HCT116 (cell line): ENCODE measurements at regions of chr17 and their contacts with region 1.

Region 1: GRCh38 chr17:39547713-39548478 is 59.8 kb downstream of the NEUROD2 start:
- DNase-seq: peak; percentile 13
- ATAC-seq: peak; percentile 92
- H3K4me3 ChIP-seq: no peak overlapping the region
- H3K27ac ChIP-seq: no peak overlapping the region
- H3K4me1 ChIP-seq: no peaks in the 10 kb centered on the region
- H3K27me3 ChIP-seq: no peaks in the 10 kb centered on the region
- CTCF ChIP-seq: peak; percentile 92 to 99 (median 98)
- POLR2A ChIP-seq: no peak
- RAD21 ChIP-seq: peak; percentile 83

Region 2: DNA sequence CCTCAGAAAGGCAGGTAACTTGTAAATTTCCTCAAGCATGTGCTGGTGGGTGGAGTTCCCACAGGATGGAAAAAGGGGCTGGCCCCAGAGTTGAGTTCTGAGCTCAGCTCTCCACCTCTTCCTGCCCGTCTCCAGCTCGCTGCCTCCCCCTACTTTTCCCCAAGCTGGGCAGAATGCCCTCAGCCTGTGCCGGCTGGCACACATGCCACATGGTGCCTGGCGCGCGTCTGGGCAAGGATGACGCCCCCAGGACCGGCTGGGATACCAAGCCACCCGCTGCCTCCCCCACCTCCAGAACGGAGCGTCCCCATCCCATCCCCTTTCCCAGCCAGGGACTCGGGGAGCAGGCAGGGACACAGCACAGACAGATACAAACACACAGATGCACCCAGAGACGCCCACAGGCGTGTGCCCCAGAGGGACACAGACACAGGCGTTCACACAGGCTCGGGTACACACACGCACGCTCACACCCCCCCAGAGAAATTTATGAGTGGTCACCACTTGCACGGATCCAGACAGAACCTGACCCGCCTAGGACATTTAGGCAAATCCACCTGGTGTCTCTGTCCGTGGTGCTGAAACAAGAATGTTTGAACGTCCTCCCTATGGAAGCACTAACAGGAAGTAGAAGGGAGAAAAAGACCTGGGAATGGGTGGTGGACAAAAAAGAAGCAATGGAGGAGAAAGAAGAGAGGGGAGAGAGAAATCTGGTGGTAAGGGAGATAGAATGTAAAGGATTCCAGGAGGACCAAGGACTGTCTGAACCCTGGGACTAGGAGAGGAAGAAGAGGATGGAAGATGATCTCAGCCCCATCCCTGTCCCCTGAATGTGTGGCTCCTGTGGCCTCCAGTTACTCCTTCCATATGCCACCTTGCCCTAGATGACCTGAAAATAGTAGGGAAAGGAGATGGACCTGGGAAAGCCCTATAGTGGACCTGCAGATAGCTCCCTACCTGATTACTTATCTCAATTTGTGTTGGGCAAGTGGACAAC is 44.4 kb after region 1 on chr17:
- CTCF ChIA-PET with region 1: no interaction called
- POLR2A ChIA-PET with region 1: no interaction called
- RAD21 ChIA-PET with region 1: no interaction called
- intact Hi-C with region 1: no loop called
- DNase-seq: peak; percentile 13
- ATAC-seq: 0 out of 2 replicates have a peak, but pooled peaks have one; percentile 22
- H3K4me3 ChIP-seq: no peak overlapping the region
- H3K27ac ChIP-seq: no peak overlapping the region
- H3K4me1 ChIP-seq: no peaks in the 10 kb centered on the region
- H3K27me3 ChIP-seq: peaks cover 14% of the 10 kb centered on the region
- CTCF ChIP-seq: no peak
- POLR2A ChIP-seq: no peak
- RAD21 ChIP-seq: no peak

Region 3: DNA sequence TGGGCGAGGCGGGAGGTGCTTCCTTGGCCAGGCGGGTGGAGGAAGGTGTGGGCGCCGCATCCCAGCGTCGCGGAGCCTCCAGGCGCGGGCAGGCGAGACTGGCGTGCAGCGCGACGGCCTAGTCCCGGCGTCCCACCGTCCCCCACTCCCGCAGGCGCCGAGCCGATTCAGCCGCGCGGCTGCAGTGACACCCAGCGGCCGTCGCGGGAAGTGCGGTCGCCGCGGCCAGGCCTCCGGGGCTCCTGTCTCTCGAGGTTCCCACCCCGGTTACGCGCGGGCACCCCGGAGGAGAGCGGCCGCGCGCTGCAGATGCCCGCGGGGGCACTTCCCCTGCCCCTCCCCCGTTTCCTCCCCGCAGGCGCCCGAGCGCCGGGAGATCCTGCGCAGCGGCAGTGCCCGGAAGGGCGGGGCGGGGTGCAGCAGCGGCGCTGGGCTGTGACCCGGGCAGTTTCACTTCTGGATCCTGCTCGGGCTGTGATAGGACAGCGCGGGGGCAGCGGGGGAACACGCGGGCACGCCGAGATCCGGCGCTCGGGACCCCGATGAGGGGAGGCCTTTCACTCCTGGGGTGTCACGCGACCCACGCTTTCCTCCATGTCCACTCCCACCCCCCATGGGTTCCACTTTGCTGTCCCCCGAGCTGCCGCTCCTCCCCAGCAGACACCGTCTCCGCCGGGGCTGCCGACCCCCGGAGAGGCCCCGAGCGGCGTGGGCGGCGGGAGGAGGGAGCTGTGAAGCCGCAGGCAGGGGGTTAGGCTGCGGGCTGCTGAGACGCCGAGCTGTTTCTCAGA is 206.5 kb after region 1 on chr17:
- CTCF ChIA-PET with region 1: no interaction called
- POLR2A ChIA-PET with region 1: no interaction called
- RAD21 ChIA-PET with region 1: no interaction called
- intact Hi-C with region 1: loop called (anchors 2 kb)
- DNase-seq: peak; percentile 73
- ATAC-seq: peak; percentile 87
- H3K4me3 ChIP-seq: peak overlapping the region; percentile 54 to 65
- H3K27ac ChIP-seq: peak overlapping the region; percentile 91
- H3K4me1 ChIP-seq: peaks cover 33 to 55% of the 10 kb centered on the region in 2 experiments
- H3K27me3 ChIP-seq: peaks cover under 1% of the 10 kb centered on the region; the same call in 1 of the 2 replicates
- CTCF ChIP-seq: peak; percentile 72 to 95 (median 74)
- POLR2A ChIP-seq: peak; percentile 78
- RAD21 ChIP-seq: peak; percentile 97

Region 4: DNA sequence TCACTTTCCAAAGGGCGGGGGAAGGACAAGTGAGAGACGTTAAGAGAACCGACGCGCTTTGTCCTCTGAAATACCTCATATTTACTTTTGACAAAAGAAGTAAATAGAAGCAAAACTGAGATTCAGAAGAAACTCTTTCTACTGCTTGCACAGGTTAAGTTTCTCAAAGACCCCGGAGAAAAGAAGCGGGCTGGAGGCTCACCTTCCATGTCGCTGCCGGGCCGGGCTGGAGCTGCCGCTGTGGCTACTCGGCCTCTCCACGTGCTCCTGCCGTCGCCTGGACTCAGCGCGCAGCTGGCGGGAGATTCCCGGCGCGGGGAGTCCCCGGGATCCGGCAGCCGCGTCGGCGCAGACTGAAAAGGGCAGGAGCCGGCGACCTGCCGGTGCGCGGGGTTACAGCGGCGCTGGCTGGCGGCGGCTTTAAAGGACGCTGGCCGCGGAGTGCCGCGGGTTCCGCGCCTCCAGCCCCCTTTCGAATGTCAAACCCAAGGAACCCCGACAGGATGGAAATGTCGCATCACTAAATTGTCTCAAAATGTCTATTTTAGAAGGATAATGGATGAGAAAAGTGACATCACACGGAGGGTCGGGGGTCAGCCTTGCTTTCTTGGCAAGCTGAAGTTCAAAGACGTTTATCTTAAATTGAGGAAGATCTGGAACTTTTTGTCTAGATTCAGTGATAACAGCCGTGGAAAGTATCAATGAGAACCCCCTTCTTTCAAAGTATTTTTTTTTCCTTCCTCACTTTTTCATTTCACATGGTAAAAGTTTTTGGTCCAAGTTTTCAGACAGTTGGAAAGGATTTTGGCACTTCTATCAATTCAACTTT is 316.2 kb after region 1 on chr17 and contains the start of gene IKZF3:
- CTCF ChIA-PET with region 1: no interaction called
- POLR2A ChIA-PET with region 1: no interaction called
- RAD21 ChIA-PET with region 1: no interaction called
- intact Hi-C with region 1: no loop called
- DNase-seq: no peak
- ATAC-seq: peak; percentile 94
- H3K4me3 ChIP-seq: peak within 1 kb of the TSS in 1 of 2 experiments; percentile 29; a peak in 2 of 4 replicates
- H3K27ac ChIP-seq: no peak within 1 kb of the TSS
- H3K4me1 ChIP-seq: peaks cover 7 to 14% of the 10 kb centered on the region in 2 experiments; a peak in 3 of 4 replicates
- H3K27me3 ChIP-seq: peaks cover 28% of the 10 kb centered on the region
- CTCF ChIP-seq: 0 out of 6 replicates have a peak, but pooled peaks of 1 of the 3 experiments have one; percentile 27
- POLR2A ChIP-seq: no peak
- RAD21 ChIP-seq: peak; percentile 63
- total RNA-seq, gene IKZF3: 0.30 TPM

Region 5: DNA sequence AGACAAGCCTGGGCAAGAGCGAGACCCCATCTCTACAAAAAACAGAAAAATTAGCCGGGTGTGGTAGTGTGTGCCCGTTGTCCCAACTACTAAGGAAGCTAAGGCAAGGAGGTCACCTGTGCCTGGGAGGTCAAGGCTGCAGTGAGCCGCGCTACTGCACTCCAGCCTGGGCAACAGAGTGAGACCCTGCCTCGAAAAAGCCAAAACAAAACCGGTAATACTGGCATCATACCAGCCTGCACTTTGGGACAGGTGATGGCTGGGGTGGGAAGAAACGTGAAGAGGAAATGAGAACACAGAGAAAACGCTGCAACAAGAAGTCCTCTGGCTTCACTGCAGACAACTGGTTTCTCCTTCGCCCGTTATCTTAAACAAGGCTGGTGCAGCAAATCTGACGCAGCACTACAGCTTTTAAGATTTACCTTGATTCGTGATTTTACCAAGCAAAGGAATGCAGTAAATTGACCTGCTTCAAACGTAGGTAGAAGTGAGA is 591.7 kb after region 1 on chr17:
- CTCF ChIA-PET with region 1: no interaction called
- POLR2A ChIA-PET with region 1: no interaction called
- RAD21 ChIA-PET with region 1: no interaction called
- intact Hi-C with region 1: no loop called
- DNase-seq: no peak
- ATAC-seq: 0 out of 2 replicates have a peak, but pooled peaks have one; percentile 0
- H3K4me3 ChIP-seq: peak overlapping the region; percentile 81 to 95
- H3K27ac ChIP-seq: peak overlapping the region; percentile 95
- H3K4me1 ChIP-seq: peaks cover 6 to 21% of the 10 kb centered on the region in 2 experiments
- H3K27me3 ChIP-seq: no peaks in the 10 kb centered on the region
- CTCF ChIP-seq: no peak
- POLR2A ChIP-seq: no peak
- RAD21 ChIP-seq: no peak